Right cardiac atrium (tissue), 5 donors: ENCODE measurements at regions of chr21 and their contacts with region 1.

Region 1: GRCh38 chr21:46097336-46098293 is at the start of gene COL6A2:
- DNase-seq: peak; percentile 69 to 91 (median 89)
- ATAC-seq: peak; percentile 84 to 87
- H3K4me3 ChIP-seq: peak within 1 kb of the TSS; percentile 94
- H3K27ac ChIP-seq: peak within 1 kb of the TSS; percentile 83
- H3K4me1 ChIP-seq: peaks cover 5% of the 10 kb centered on the region
- H3K27me3 ChIP-seq: no peaks in the 10 kb centered on the region
- total RNA-seq, gene COL6A2: 198 to 323 (median 274) TPM

Region 2: DNA sequence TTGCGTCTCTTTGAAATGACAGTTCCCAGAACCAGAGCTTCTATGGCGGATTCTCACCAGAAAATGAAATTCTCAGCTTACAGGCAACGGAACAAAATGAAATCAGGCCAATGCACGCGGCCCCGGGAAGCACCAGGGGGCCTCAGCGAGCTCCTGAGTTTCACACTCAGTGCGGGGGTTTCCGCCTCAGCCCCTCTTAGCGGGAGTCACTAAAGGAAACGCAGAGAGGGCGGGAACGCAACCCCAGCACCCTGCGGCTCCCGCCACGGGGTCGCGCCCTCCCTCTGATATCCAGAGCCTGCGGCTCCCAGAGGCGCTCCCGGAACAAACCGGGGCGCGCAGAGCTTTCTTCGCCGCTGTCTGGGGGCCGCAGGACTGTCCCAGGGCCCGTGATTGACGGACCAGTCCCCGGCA is 123.9 kb before region 1 on chr21:
- intact Hi-C with region 1: loop called in 1 of 4 experiments (anchors 5 kb)
- DNase-seq: peak; percentile 90 to 95 (median 94)
- ATAC-seq: peak; percentile 56 to 57
- H3K4me3 ChIP-seq: peak overlapping the region; percentile 57
- H3K27ac ChIP-seq: peak overlapping the region; percentile 92
- H3K4me1 ChIP-seq: peaks cover 5% of the 10 kb centered on the region
- H3K27me3 ChIP-seq: no peaks in the 10 kb centered on the region

Region 3: DNA sequence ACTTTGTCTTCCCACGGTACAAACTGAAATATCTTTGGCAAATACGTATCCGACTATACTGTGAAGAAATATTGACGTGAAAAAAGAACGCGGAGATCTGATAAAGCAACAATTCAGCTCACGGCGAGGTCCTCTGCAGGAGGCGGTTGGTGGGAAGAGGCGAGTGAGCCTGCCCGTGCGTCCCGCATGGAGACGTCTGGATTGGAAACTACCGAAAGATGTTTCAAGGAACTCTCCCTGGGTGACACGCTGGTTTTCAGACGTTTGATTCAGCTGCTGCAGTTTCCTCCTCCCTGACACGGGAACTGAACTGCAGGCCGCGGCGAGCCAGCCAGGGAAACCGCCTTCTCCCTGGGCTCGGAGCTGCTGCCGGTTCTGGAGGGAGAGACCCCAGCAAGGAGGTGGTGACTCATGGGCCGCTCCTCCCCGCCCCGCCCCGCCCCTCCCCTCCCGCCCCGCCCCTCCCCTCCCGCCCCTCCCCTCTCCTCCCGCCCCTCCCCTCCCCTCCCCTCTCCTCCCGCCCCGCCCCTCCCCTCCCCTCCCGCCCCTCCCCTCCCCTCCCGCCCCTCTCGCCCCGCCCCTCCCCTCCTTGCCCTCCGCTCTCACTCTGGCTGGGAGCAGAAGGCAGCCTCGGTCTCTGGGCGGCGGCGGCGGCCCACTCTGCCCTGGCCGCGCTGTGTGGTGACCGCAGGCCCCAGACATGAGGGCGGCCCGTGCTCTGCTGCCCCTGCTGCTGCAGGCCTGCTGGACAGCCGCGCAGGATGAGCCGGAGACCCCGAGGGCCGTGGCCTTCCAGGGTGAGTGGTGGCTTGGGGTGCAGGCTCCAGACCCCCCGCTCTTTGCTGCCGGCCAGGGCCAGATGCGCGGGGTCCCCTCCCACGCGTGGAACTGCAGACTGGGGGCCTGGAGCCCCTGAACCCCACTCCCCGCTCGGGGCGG is 116.2 kb before region 1 on chr21 and contains the start of gene COL6A1:
- intact Hi-C with region 1: loop called in 2 of 4 experiments (anchors 5 kb)
- DNase-seq: peak; percentile 90 to 94 (median 94)
- ATAC-seq: peak; percentile 77 to 81
- H3K4me3 ChIP-seq: peak within 1 kb of the TSS; percentile 81
- H3K27ac ChIP-seq: peak within 1 kb of the TSS; percentile 76
- H3K4me1 ChIP-seq: no peaks in the 10 kb centered on the region
- H3K27me3 ChIP-seq: no peaks in the 10 kb centered on the region
- total RNA-seq, gene COL6A1: 112 to 192 (median 171) TPM

Region 4: DNA sequence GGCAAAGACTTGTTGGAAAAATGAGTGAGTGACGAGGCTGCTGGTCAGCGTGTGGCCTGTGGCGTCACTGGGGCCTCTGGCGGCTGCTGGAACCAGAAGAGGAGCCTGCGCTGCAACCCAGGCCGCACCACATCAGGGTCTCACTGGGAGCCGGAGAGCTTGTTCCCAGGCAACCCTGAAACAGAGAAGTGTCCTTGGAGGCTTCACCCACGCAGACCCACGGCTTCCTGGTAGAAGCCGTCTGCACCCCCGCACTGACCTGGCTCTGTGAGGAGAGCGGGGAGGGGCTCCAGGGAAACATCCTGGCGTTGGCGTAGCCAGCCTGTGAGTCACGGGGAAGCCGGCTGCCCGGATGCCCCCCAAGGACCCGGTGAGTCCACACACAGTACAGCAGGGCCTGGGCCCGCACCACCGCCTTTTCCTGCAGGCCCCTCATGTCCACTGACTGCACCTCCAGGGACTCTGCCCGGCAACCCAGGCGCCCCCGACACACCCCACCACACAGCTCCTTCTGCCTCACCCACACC is 58.7 kb before region 1 on chr21:
- intact Hi-C with region 1: loop called in 2 of 4 experiments (anchors 10 kb)
- DNase-seq: peak; percentile 90 to 92 (median 91)
- ATAC-seq: peak; percentile 76 to 88
- H3K4me3 ChIP-seq: no peak overlapping the region
- H3K27ac ChIP-seq: peak overlapping the region; percentile 19
- H3K4me1 ChIP-seq: peaks cover 3% of the 10 kb centered on the region
- H3K27me3 ChIP-seq: no peaks in the 10 kb centered on the region